ENCODE measurements at regions of chr5 and their contacts with region 1.

Region 1: DNA sequence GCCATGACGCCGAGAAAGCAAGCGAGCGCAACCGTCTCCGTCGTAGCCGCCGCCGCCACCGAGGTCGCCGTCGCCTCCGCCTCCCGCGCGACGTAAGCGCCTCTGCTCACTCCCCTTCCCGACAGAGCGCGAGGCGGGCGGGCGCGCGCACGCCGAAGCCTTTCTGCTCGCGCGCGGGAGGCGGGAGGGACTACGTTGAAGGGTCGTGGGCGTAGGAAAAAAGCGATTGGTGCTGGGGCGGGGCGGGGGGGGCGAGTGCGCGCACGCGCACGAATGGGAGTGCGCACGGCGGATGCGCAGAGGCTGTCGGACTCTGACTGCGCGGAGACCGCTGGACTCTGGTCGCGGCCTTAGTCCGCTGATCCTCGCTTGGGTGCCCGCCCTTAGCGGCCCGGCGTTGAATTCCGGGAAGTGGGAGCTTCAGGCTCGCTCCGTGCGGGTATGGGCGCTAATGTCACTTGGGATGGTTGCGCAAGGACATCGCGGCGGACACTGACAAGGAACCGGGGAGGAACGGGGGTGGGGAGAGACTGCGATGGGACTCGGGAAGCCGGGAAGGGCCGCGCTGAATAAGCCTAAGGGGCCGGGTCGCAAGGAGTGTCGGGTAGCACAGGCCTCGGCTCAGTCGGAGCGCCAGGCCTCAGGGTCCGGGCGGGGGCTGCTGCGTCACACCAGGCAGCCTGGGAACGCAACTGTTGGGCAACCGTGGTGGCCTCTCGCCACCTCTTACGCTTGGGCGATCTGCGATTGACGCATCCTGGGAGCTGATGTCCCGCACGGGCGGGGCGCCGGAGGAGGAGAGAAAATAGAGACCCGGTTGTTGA is at the start of gene CHD1:
- DNase-seq: peak; percentile 98
- H3K4me3 Mint-ChIP-seq: peak within 1 kb of the TSS; percentile 78
- H3K27ac Mint-ChIP-seq: peak within 1 kb of the TSS; percentile 100
- H3K4me1 Mint-ChIP-seq: peaks cover 16% of the 10 kb centered on the region
- H3K27me3 Mint-ChIP-seq: no peaks in the 10 kb centered on the region
- CTCF ChIP-seq: no peak
- total RNA-seq, gene CHD1: 50.8 and 54.7 TPM in 2 replicates

Region 2: DNA sequence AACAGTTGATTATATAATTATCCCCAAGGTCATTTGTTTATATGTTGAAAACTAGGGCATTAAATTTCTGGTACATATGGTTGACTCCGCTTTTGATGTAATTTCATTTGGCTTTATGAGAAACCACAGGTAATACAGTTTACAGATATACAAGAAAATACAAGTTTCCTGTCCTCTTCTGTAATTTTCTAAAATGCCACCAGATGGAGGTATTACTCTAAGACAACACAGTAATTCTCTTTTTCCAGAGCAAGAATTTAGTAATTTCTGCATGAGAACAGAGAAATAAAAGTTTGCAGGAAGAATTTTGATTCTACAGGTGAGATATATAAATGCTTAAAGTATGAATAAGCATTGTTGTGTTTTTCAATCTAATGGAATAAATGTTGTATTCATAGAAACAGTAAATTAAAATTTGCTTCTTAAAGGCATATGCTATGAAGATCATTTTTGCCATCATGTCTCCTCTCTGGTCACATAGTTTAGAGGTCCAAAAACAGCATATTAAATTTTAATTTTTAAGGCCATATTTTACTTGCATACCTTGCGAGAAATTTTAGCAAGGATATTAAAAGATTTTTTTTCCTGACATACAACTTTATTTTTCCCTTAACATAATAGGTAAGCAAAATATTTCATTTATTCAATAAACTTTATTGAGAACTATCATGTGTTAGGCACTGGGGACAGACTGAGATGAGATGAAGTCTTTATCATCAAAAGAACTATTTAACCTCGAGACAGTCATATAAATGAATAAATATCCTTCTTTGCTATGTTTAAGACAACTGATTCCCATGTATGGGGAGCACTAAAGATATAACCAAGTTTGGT is 23.0 kb before region 1 on chr5:
- CTCF ChIA-PET with region 1: no interaction called
- POLR2A ChIA-PET with region 1: interaction called, 78 read pairs
- intact Hi-C with region 1: no loop called
- DNase-seq: peak; percentile 60
- H3K4me3 Mint-ChIP-seq: no peak overlapping the region
- H3K27ac Mint-ChIP-seq: peak overlapping the region; percentile 31
- H3K4me1 Mint-ChIP-seq: peaks cover 22% of the 10 kb centered on the region
- H3K27me3 Mint-ChIP-seq: no peaks in the 10 kb centered on the region
- CTCF ChIP-seq: peak; percentile 78

Region 3: GRCh38 chr5:98917433-98917832 is 11.7 kb before region 1 on chr5:
- CTCF ChIA-PET with region 1: interaction called, 5 read pairs
- POLR2A ChIA-PET with region 1: interaction called, 78 read pairs
- intact Hi-C with region 1: no loop called
- DNase-seq: no peak
- H3K4me3 Mint-ChIP-seq: no peak overlapping the region
- H3K27ac Mint-ChIP-seq: peak overlapping the region; percentile 75
- H3K4me1 Mint-ChIP-seq: peaks cover 21% of the 10 kb centered on the region
- H3K27me3 Mint-ChIP-seq: no peaks in the 10 kb centered on the region
- CTCF ChIP-seq: no peak

Region 4: DNA sequence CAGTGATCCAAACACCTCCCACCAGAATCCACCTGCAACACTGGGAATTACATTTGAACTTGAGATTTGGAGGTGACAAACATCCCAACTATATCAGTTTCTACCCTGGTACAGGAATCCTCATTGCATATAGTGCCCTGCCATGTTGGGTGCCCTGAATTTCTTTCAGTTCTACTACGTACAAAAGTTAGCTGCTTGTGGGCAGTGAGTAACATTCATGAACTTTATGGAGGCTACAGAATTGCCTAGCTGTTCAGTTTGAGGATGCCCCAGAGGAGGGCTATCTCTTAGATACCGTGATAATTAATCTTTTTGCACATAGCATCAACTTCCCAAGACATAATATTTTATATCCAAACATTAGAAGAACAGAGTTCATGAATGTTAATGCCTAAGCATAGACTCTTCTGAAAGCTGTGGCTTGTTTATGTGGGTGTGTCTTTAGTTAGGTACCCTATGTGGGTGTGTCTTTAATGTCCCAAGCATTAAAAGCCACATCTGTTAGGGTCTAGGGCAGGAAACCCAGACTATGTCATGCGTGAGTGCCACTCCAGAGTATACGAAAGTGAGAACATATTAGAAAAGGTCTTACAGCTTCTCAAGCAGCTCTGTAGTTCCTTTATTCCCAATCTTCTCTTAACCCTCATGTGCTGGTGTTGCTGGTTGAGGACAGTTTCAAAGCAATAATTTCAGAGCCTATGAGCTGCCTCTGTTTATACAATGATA is 46.8 kb after region 1 on chr5:
- CTCF ChIA-PET with region 1: no interaction called
- POLR2A ChIA-PET with region 1: interaction called, 11 read pairs
- intact Hi-C with region 1: no loop called
- DNase-seq: no peak
- H3K4me3 Mint-ChIP-seq: no peak overlapping the region
- H3K27ac Mint-ChIP-seq: peak overlapping the region; percentile 35
- H3K4me1 Mint-ChIP-seq: peaks cover 22% of the 10 kb centered on the region
- H3K27me3 Mint-ChIP-seq: no peaks in the 10 kb centered on the region
- CTCF ChIP-seq: no peak

Region 5: GRCh38 chr5:99019812-99020697 is 91.0 kb after region 1 on chr5:
- CTCF ChIA-PET with region 1: no interaction called
- POLR2A ChIA-PET with region 1: interaction called, 36 read pairs
- intact Hi-C with region 1: no loop called
- DNase-seq: peak; percentile 81
- H3K4me3 Mint-ChIP-seq: peak overlapping the region; percentile 5
- H3K27ac Mint-ChIP-seq: peak overlapping the region; percentile 29
- H3K4me1 Mint-ChIP-seq: peaks cover 12% of the 10 kb centered on the region
- H3K27me3 Mint-ChIP-seq: no peaks in the 10 kb centered on the region
- CTCF ChIP-seq: no peak

Measured in MCF 10A (cell line).